Head of caudate nucleus (tissue), 42 donors: ENCODE measurements at regions of chr11 and their contacts with region 1.

Region 1: DNA sequence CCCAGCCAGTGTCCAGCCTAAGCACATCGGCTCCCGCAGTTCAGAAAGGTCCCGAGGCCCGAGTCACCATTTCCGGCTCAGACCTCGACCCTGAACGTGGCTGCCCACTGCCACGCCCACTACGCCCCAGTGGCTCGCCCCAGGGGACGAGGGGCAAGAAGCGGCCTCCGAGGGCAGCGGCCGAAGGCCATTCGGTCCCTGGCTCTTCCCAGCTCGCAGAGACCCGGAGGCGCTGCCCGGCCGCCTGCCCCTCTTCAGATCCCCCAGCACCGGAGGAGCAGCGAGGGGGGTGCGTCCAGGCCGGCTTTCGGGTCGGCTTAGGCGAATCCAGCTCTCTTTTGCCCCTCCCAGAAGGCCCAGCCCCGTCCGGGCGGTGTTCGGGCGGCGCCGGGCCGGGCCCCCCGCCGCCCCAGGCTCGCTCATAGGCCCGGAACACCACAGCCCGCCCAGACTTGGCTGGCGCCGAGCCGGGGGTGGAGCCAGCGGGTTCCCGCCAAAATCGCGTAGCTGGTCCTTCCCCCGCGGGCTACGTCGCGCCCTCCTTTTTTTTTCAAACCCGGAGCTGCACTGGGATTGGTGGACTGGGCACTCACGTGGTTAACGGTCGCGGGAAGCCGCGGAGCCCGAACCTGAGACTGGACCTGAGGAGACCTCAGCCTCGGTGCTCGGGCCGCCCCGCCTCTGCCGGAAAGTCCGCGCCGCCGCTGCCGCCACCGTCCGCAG is at the start of gene WEE1:
- DNase-seq: peak; percentile 85 to 98 (median 94)

Region 2: DNA sequence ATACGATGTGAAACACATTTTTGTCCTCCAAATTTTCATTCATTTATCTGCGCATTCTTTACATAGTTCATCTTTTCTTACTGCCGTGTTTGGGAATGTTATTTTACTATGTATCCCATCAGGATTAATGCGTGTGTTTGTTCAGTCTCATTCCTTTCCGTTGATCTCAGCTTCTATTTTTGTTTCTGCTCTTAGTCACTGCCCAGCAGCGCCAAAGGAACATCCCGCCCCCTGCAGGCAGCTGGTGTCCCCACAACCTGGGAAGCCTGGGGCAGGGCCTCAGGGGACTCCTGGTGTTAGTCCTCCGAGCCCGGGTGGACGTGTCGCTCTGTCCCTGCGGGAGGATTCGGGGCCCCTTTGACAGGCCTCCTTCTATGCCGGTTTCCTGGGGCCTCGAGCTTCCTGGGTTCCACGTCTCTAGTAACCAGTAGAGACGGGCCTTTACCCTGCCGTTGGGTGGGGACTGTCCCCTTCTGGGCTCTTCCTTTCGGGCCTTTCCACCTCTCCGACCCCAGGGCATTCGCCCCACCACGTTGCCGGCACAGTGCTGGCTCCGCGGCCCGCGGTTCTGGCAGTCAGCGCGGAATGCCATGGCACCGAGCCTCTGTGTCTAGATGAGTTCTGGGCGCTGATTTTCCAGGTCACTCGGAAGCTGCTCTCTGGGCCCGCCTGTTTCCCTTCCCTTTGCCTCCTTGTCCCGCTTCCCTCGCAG is 40.1 kb after region 1 on chr11:
- intact Hi-C with region 1: loop called (anchors 5 kb)
- DNase-seq: peak; percentile 87 to 97 (median 94)